Activated CD4-positive, alpha-beta T cell treated with anti-CD3 and anti-CD28 coated beads, Interleukin-2, amount 10 ng/mL, durations not matched to agents 24 days and 14 days (primary cell): ENCODE measurements at regions of chr22 and their contacts with region 1.

Region 1: GRCh38 chr22:19143967-19144400 is 467 bp downstream of the ESS2 start:
- DNase-seq: peak; percentile 85
- H3K4me3 Mint-ChIP-seq: peak overlapping the region; percentile 96
- H3K27ac Mint-ChIP-seq: peak overlapping the region; percentile 94
- H3K4me1 Mint-ChIP-seq: peaks cover 13% of the 10 kb centered on the region
- H3K27me3 Mint-ChIP-seq: peaks cover 21% of the 10 kb centered on the region

Region 2: GRCh38 chr22:19035474-19036228 is 108.3 kb before region 1 on chr22:
- intact Hi-C with region 1: no loop called
- DNase-seq: no peak
- H3K4me3 Mint-ChIP-seq: no peak overlapping the region
- H3K27ac Mint-ChIP-seq: no peak overlapping the region
- H3K4me1 Mint-ChIP-seq: no peaks in the 10 kb centered on the region
- H3K27me3 Mint-ChIP-seq: peaks cover 5% of the 10 kb centered on the region

Region 3: DNA sequence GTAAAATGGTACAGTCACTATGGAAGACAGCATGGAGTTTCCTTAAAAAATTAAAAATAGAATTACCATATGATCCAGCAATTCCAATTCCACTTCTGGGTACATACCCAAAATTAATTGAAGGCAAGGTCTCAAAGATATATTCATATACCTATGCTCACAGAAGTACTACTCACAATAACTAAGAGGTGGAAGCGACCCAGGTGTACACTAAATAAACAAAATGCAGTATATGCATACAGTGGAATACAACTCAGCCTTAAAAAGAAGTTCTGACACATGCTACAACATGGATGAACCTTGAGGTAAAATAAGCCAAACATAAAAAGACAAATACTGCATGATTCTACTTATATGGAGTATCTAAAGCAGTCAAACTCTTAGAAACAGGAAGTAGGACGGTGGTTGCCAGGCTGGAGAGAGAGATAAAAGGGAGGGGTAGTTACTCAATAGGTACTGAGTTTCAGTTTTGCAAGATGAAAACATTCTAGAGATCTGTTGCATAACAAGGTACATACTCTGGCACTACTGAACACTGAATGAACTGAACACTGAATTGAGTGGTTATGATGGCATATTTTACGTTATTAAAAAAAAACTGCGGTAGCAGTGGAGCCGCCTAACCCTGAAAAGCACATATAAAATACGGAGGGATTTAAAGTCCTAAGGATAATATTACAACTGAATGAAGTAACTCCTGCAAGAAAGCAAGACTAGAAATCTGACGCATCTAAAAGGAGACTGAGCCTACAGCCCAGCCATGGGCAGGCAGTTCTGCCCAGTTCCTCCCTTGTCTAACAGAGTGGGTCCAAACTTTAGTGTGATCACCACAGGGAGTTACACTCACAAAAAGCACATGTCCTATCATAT is 34.6 kb before region 1 on chr22:
- intact Hi-C with region 1: loop called (anchors 1 kb)
- DNase-seq: peak; percentile 86
- H3K4me3 Mint-ChIP-seq: peak overlapping the region; percentile 59
- H3K27ac Mint-ChIP-seq: peak overlapping the region; percentile 23
- H3K4me1 Mint-ChIP-seq: peaks cover 45% of the 10 kb centered on the region
- H3K27me3 Mint-ChIP-seq: no peaks in the 10 kb centered on the region

Region 4: DNA sequence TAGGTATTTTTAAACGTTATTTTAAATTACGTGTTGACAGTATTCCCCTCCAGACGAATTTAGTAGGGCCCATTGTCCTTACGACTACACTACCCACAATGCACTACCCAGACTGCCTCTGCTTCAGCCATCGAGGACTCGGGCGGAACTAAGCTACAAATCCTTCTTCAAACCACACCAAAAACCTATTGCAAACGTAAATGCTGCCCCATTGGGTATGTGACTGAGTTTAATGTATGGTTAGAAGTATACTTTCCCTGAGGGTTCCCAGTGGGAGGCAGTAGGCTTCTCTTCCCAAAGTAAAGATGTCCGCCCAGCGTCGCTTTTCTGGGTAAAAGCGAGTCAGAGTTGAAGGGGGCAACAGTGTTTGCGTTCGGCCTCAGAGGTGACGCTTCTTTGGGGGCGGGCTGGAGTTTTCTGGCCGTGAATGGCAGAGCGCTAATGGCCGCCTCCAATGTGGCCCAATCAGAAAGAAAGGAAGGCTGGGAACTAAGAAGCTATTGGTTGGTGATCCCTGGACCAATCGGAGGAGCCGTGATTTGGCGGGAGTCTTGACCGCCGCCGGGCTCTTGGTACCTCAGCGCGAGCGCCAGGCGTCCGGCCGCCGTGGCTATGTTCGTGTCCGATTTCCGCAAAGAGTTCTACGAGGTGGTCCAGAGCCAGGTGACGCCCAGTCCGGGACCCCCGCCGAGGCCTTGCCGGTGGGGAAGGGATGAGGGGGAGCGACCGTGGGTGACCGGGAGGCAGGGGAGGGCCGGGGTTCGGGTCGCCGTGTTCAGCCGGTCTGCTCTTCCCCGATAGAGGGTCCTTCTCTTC is 335.6 kb after region 1 on chr22 and contains the start of gene CDC45:
- intact Hi-C with region 1: loop called (anchors 1 kb)
- DNase-seq: peak; percentile 98
- H3K4me3 Mint-ChIP-seq: peak within 1 kb of the TSS; percentile 100
- H3K27ac Mint-ChIP-seq: peak within 1 kb of the TSS; percentile 98
- H3K4me1 Mint-ChIP-seq: peaks cover 37% of the 10 kb centered on the region
- H3K27me3 Mint-ChIP-seq: no peaks in the 10 kb centered on the region
- total RNA-seq, gene CDC45: 121 and 123 TPM in 2 replicates